ENCODE measurements at regions of chr15 and their contacts with region 1.

Region 1: DNA sequence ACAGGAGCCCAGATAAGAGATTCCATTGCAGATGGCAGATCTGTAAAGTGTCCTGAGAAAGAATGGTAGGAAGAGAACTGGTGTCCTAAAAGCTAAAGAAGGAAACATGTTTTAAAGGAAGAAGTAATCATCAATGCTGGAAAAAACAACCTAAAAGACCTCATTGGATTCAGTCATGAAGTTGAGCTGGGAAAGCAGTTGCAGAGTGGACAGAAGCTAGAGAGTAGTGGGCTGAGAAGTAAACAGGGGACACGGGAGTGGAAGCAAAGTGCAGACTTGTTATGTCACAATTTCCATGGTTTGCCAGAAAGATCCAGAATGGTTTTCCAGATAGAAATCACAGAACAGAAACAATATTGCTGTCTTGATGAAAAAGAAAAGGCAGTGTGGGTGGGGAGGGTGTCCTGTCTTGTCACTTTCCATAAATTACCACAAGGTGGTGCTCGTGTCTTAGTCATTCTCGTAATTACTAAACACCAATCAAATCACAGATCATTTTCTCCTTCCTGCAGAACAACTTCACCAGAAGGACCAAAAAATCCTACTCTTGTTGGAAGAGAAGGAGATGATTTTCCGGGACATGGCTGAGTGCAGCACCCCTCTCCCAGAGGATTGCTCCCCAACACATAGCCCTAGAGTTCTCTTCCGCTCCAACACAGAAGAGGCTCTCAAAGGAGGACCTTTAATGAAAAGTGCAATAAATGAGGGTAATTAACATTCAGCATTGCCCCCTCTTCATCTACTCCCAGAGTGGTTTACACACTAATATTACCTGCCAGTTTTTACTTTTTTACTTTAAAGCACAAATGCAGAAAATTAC is 64.5 kb downstream of the KLHL25 start:
- DNase-seq: peak; percentile 64
- H3K4me3 Mint-ChIP-seq: no peak overlapping the region
- H3K27ac Mint-ChIP-seq: no peak overlapping the region
- H3K4me1 Mint-ChIP-seq: no peaks in the 10 kb centered on the region
- H3K27me3 Mint-ChIP-seq: no peaks in the 10 kb centered on the region
- CTCF ChIP-seq: peak; percentile 70

Region 2: GRCh38 chr15:85831415-85832113 is 101.4 kb after region 1 on chr15:
- CTCF ChIA-PET with region 1: interaction called, 8 read pairs
- intact Hi-C with region 1: loop called (anchors 1 kb)
- DNase-seq: peak; percentile 68
- H3K4me3 Mint-ChIP-seq: no peak overlapping the region
- H3K27ac Mint-ChIP-seq: no peak overlapping the region
- H3K4me1 Mint-ChIP-seq: no peaks in the 10 kb centered on the region
- H3K27me3 Mint-ChIP-seq: no peaks in the 10 kb centered on the region
- CTCF ChIP-seq: peak; percentile 69

Region 3: DNA sequence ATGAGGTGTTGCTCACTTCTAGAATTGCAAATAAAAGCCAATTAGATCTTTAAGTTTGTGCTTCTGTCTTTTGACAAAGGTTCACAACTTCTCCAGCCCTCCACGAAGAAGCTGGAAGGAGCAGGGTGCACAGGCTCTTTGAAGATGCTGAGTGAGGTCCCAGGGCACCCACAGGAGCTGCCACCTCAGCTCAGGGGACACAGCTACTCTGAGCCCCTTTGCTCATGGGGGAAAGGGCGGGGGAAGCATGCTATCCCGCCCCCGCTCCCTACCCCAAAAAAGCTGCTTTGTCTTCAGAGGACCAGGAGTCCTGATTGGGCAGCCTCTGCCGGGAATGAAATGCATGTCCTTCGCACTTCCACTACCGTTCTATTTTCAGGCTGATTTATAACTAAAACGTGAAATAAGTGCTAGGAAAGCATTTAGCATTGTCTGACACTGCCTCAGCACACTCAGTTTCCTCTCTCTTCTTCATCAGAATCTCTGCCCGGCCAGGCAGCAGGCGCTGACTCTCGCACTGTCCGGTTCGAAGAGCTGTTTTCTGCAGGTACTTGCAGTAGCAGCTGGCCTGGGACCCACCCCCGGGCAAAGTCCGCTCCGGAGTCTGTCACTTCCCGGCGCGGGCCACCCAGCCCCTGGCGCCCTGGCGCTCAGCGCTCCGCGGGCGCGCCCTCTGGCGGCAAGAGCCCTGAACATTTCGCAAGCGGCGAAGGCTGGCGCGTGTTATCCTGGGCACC is 110.0 kb after region 1 on chr15:
- CTCF ChIA-PET with region 1: interaction called, 8 read pairs
- intact Hi-C with region 1: loop called (anchors 1 kb)
- DNase-seq: peak; percentile 98
- H3K4me3 Mint-ChIP-seq: peak overlapping the region; percentile 57
- H3K27ac Mint-ChIP-seq: no peak overlapping the region
- H3K4me1 Mint-ChIP-seq: peaks cover 31% of the 10 kb centered on the region
- H3K27me3 Mint-ChIP-seq: peaks cover 20% of the 10 kb centered on the region
- CTCF ChIP-seq: peak; percentile 88

Region 4: GRCh38 chr15:85941186-85941861 is 211.1 kb after region 1 on chr15:
- CTCF ChIA-PET with region 1: no interaction called
- intact Hi-C with region 1: no loop called
- DNase-seq: no peak
- H3K4me3 Mint-ChIP-seq: no peak overlapping the region
- H3K27ac Mint-ChIP-seq: no peak overlapping the region
- H3K4me1 Mint-ChIP-seq: no peaks in the 10 kb centered on the region
- H3K27me3 Mint-ChIP-seq: peaks cover 32% of the 10 kb centered on the region
- CTCF ChIP-seq: no peak